Left lung (tissue), 14 donors: ENCODE measurements at regions of chr5 and their contacts with region 1.

Region 1: GRCh38 chr5:120055858-120056257 is 408.2 kb upstream of the PRR16 start:
- DNase-seq: peak in 2 of 4 donors; percentile 2 to 48
- ATAC-seq: peak; percentile 58
- H3K4me3 ChIP-seq: no peak overlapping the region
- H3K27ac ChIP-seq: no peak overlapping the region
- H3K4me1 ChIP-seq: no peaks in the 10 kb centered on the region
- H3K27me3 ChIP-seq: no peaks in the 10 kb centered on the region
- CTCF ChIP-seq: no peak

Region 2: DNA sequence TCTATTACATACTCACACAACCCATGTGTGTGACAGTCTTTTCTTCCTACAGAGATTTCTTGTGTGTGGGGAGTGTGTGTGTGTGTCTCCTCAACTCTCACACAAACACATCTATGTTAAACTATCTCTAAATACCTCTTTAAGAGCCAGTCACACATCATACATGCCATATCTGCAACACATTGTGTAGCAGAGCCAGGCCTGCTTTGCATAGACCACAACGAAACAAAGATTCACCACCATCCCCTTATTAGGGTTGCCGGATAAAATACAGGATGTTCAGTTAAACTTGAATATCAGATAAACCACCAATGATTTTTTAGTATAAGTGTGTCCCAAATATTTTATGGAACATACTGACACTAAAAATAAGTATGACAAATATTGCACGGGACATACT is 424.2 kb before region 1 on chr5:
- intact Hi-C with region 1: no loop called
- DNase-seq: no peak
- ATAC-seq: no peak
- H3K4me3 ChIP-seq: no peak overlapping the region
- H3K27ac ChIP-seq: no peak overlapping the region
- H3K4me1 ChIP-seq: no peaks in the 10 kb centered on the region
- H3K27me3 ChIP-seq: no peaks in the 10 kb centered on the region
- CTCF ChIP-seq: no peak

Region 3: GRCh38 chr5:120108586-120109248 is 52.9 kb after region 1 on chr5:
- intact Hi-C with region 1: no loop called
- DNase-seq: no peak
- ATAC-seq: no peak
- H3K4me3 ChIP-seq: no peak overlapping the region
- H3K27ac ChIP-seq: no peak overlapping the region
- H3K4me1 ChIP-seq: no peaks in the 10 kb centered on the region
- H3K27me3 ChIP-seq: no peaks in the 10 kb centered on the region
- CTCF ChIP-seq: no peak

Region 4: GRCh38 chr5:120160120-120160895 is 104.5 kb after region 1 on chr5:
- intact Hi-C with region 1: no loop called
- DNase-seq: no peak
- ATAC-seq: no peak
- H3K4me3 ChIP-seq: no peak overlapping the region
- H3K27ac ChIP-seq: no peak overlapping the region
- H3K4me1 ChIP-seq: no peaks in the 10 kb centered on the region
- H3K27me3 ChIP-seq: no peaks in the 10 kb centered on the region
- CTCF ChIP-seq: no peak

Region 5: DNA sequence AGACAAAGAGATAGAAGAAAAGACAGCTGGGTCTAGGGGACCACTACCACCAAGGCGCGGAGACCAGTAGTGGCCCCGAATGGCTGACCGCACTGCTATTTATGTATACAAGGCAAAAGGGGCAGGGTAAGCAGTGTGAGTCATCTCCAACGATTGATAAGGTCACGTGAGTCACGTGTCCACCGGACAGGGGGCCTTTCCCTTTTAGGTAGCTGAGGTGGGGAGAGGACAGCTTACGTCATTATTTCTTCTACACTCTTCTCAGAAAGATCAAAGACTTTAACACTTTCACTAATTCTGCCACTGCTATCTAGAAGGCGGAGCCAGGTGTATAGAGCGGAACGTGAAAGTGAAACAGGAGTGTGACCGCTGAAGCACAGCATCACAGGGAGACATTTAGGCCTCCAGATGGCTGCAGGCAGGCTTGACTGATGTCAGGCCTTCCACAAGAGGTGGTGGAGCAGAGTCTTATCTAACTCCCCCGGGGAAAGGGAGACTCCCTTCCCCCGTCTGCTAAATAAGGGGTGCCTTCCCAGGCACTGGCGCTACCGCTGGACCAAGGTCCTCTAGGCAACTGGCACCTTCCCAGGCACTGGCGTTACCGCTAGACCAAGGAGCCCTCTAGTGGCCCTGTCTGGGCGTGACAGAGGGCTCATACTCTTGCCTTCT is 402.1 kb after region 1 on chr5:
- intact Hi-C with region 1: loop called in 1 of 2 experiments (anchors 10 kb)
- DNase-seq: peak in 3 of 4 donors; percentile 53 to 88 (median 73)
- ATAC-seq: peak; percentile 80
- H3K4me3 ChIP-seq: peak overlapping the region in 1 of 2 donors; percentile 34
- H3K27ac ChIP-seq: no peak overlapping the region
- H3K4me1 ChIP-seq: no peaks in the 10 kb centered on the region
- H3K27me3 ChIP-seq: peaks cover 0 to under 1% of the 10 kb centered on the region in 2 donors
- CTCF ChIP-seq: peak; percentile 59 to 66